AG04449 (cell line): ENCODE measurements at regions of chr3 and their contacts with region 1.

Region 1: GRCh38 chr3:14461748-14462324 is 59.4 kb downstream of the SLC6A6 start:
- DNase-seq: no peak
- H3K4me3 ChIP-seq: no peak overlapping the region
- CTCF ChIP-seq: peak; percentile 91

Region 2: GRCh38 chr3:14210843-14211594 is 250.8 kb before region 1 on chr3:
- CTCF ChIA-PET with region 1: interaction called, 303 read pairs
- POLR2A ChIA-PET with region 1: interaction called, 4 read pairs
- DNase-seq: peak; percentile 97
- H3K4me3 ChIP-seq: no peak overlapping the region
- CTCF ChIP-seq: no peak

Region 3: DNA sequence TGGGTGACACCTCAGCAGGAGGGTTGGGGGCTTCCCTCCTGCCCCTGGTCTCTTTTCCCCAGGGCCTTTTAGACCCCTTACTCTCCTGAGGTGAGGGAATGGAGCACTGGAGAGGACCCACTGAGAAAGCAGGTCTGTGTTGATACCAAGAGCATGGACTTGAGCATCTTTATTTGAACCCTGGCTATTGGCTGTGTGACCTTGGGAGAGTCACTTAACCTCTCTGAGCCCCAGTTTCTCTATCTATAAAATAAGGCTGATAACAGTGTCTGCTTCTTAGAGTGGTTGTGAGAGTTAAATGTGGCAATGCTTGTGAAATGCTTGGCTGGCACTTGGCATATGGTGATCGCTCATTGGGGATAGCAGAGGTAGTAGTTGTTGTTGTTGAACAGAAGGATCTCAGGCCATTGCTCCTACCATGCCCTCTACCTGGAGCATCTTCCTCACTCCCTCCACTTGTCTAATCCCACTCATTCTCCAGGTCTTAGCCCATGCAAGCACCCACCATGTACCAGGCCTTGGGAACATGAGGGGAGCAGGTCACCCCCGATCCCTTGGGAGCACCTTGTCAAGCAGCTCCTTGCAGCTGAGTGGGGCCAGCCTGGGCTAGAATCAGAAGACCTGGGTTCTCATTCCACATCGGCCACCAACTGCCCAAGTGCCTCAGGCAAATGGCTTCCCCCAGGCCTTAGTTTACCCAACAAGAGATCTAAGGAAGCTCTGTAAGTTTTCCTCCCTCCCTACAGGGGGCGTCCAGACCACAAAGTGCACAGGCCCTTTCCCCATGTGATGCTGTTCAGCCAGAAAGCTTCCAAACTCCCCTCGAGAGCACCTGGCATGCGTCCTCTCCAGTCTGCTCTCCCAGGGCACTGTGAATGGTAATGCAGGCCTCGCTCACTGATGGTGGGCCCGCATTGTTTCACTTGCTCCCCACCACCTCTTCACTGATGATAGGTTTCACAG is 186.6 kb before region 1 on chr3:
- CTCF ChIA-PET with region 1: interaction called, 12 read pairs
- POLR2A ChIA-PET with region 1: no interaction called
- DNase-seq: no peak
- H3K4me3 ChIP-seq: no peak overlapping the region
- CTCF ChIP-seq: no peak

Region 4: DNA sequence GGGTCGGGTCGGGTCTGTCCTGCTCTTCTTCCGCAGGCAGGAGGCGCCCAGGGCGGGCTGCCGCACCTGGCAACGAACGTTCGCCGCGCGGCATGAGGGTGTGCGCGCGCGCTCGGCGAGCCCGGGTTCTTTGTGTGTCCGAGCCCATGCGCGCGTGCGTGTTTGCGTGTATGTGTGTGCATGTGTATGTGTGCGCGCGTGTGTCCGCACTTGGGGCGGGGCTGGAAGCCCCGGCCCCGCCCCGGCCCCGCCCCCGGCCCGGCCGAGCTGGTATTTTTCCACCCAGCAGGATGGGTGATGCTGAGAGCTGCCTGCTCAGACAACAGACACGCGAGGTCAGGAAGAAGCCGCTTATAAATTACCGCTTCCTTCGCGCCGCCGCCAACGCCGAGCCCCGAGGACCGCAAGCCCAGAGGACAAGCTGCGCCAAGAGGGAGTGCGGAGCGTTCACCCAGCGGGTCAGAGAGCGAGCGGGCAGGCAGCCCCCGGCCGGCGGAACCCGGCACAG is 59.5 kb before region 1 on chr3 and contains the start of gene SLC6A6:
- CTCF ChIA-PET with region 1: interaction called, 12 read pairs
- POLR2A ChIA-PET with region 1: interaction called, 4 read pairs
- DNase-seq: peak; percentile 52
- H3K4me3 ChIP-seq: peak within 1 kb of the TSS; percentile 96
- CTCF ChIP-seq: peak; percentile 41

Region 5: DNA sequence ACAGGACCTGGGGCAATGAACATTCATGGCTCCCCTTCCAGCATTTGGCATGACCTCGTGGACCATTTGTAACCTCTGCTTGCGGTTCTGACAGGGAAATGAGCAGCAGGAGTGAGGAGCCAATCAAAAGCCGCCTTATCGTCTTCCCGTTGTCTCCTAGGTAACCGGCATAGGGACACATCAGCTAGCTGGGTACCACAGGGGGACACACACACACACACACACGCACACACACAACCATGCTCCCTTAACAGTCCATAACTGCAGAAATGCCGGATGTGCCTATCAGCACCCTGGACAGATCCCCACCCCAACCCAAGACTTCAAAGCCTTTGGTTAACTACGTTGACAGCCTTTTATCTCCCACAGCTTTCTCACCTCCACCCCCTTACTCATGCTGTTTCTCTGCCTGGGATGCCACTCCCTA is 136.3 kb after region 1 on chr3:
- CTCF ChIA-PET with region 1: no interaction called
- POLR2A ChIA-PET with region 1: no interaction called
- DNase-seq: no peak
- H3K4me3 ChIP-seq: no peak overlapping the region
- CTCF ChIP-seq: no peak

Region 6: DNA sequence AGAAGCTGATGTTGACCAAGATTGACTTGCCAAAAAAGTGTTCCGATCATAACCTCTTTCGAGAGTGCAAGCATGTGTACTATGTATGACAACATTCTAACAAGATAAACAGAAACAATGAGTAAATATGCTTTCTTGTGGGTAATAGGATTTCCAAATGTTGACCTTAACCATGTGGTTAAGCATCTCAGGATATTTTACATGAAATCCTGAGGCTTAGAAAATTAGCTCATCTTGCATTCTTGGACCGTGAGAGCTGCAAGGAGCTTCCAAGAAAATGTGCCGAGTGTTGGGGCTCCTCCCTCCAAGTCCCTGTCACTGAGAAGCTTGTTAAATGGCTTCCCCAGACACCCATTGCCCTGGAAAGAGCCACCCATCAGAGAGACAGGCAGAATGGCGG is 263.2 kb after region 1 on chr3:
- CTCF ChIA-PET with region 1: no interaction called
- POLR2A ChIA-PET with region 1: no interaction called
- DNase-seq: peak; percentile 12
- H3K4me3 ChIP-seq: no peak overlapping the region
- CTCF ChIP-seq: no peak